ENCODE measurements at regions of chr2 and their contacts with region 1.

Region 1: DNA sequence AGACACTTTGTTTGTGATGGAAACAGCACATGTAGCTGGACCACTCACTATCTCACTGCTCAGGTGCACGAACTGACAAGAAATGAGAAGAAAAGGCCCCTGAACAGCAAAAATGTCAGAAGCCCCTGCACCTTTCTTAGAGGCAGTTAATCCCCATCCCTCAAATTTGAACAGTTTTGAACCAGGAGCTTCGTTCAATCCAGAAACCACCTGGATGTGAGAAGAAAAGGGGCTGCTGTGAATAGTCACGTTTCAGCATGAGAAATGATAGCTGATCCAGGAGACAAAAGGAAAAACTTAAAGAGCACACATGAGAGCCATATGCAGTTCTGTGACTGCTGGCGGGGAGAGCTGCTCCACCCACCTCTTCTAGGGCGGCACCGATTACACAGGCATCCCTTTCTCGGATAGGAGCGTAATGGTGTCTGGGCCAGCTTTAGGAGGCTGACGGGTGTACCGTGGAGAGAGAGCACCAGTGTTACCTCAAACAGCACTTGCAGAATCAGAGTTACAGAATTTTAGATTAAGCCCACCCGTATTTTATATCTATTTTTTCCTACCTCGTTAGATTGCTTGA is 117.0 kb upstream of the EML6 start:
- DNase-seq: no peak
- CTCF ChIP-seq: no peak

Region 2: GRCh38 chr2:54558188-54559005 is 48.1 kb before region 1 on chr2:
- CTCF ChIA-PET with region 1: interaction called, 12 read pairs
- POLR2A ChIA-PET with region 1: no interaction called
- DNase-seq: peak; percentile 67
- CTCF ChIP-seq: no peak

Region 3: GRCh38 chr2:54589340-54590215 is 16.9 kb before region 1 on chr2:
- CTCF ChIA-PET with region 1: interaction called, 58 read pairs
- POLR2A ChIA-PET with region 1: no interaction called
- DNase-seq: no peak
- CTCF ChIP-seq: no peak

Region 4: DNA sequence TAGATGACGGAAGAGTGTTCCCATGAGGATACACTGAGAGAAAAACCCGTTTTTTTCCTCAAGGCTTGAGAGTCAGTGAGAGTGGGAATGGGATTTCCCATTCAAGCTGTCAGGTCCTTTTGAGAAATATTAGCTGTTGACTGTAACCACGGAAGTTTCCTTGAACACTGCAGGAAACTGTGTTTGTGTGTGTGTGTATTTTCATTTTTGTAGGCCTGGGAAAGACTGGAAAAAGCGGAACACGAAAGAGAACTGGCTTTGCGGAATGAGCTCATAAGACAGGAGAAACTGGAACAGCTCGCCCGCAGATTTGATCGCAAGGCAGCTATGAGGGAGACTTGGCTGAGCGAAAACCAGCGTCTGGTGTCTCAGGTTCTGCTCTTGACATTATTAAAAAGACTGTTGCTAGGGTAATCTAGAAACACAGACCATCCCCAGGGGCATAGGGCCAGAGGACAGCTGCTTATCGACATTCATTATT is 18.1 kb after region 1 on chr2:
- CTCF ChIA-PET with region 1: interaction called, 16 read pairs
- POLR2A ChIA-PET with region 1: no interaction called
- DNase-seq: no peak
- CTCF ChIP-seq: no peak

Region 5: GRCh38 chr2:54640834-54641540 is 34.5 kb after region 1 on chr2:
- CTCF ChIA-PET with region 1: no interaction called
- POLR2A ChIA-PET with region 1: no interaction called
- DNase-seq: no peak
- CTCF ChIP-seq: no peak